ENCODE measurements at regions of chr3 and their contacts with region 1.

Region 1: GRCh38 chr3:31768479-31769123 is 212.5 kb downstream of the OSBPL10 start:
- DNase-seq: peak in 1 of 2 donors; percentile 71
- ATAC-seq: peak; percentile 43 to 69 (median 49)
- H3K4me3 ChIP-seq: no peak overlapping the region
- H3K4me3 Mint-ChIP-seq: no peak overlapping the region
- H3K27ac ChIP-seq: no peak overlapping the region
- H3K27ac Mint-ChIP-seq: no peak overlapping the region
- H3K4me1 ChIP-seq: no peaks in the 10 kb centered on the region
- H3K4me1 Mint-ChIP-seq: peaks cover 18 to 21% of the 10 kb centered on the region in 2 donors
- H3K27me3 ChIP-seq: no peaks in the 10 kb centered on the region
- H3K27me3 Mint-ChIP-seq: peaks cover 2 to 6% of the 10 kb centered on the region in 2 donors
- CTCF ChIP-seq: peak; percentile 64

Region 2: DNA sequence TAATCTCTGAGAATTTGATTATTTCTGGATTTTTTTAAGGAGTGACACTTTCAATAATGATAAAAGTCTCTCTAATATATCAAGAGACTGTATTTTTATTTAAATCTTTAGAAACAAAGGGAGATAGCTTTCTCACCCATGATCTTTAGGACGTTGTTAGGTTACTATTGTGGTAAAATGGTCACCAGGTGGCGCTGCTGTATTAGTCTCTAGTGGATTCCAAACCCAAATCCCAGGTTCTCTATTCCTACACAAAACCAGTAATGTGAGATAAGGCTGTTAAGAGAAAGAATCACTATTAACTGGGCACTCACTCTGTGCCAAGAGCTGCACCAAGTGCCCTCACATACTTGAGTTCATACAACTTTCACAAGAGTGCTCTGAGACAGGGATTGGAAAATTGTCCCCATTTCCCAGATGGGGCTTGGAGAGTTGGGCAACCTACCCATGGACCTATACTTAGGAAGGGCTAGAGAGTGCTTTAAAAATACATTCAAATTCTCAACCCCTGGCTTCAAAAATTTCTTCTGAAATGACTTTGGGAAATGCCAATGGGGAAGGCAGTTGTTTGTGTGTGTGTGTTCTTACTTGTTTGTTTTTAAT is 1755.6 kb before region 1 on chr3:
- intact Hi-C with region 1: loop called (anchors 10 kb)
- DNase-seq: peak; percentile 18 to 69
- ATAC-seq: peak in 1 of 3 donors; percentile 59
- H3K4me3 ChIP-seq: no peak overlapping the region
- H3K4me3 Mint-ChIP-seq: no peak overlapping the region
- H3K27ac ChIP-seq: no peak overlapping the region
- H3K27ac Mint-ChIP-seq: no peak overlapping the region
- H3K4me1 ChIP-seq: no peaks in the 10 kb centered on the region
- H3K4me1 Mint-ChIP-seq: no peaks in the 10 kb centered on the region
- H3K27me3 ChIP-seq: no peaks in the 10 kb centered on the region
- H3K27me3 Mint-ChIP-seq: no peaks in the 10 kb centered on the region
- CTCF ChIP-seq: peak; percentile 74

Region 3: GRCh38 chr3:30768703-30769685 is 999.6 kb before region 1 on chr3:
- intact Hi-C with region 1: loop called (anchors 1 kb)
- DNase-seq: peak; percentile 55 to 78
- ATAC-seq: peak in 2 of 3 donors; percentile 55 to 59
- H3K4me3 ChIP-seq: no peak overlapping the region
- H3K4me3 Mint-ChIP-seq: peak overlapping the region; percentile 19
- H3K27ac ChIP-seq: no peak overlapping the region
- H3K27ac Mint-ChIP-seq: no peak overlapping the region
- H3K4me1 ChIP-seq: no peaks in the 10 kb centered on the region
- H3K4me1 Mint-ChIP-seq: peaks cover 13 to 16% of the 10 kb centered on the region in 2 donors
- H3K27me3 ChIP-seq: no peaks in the 10 kb centered on the region
- H3K27me3 Mint-ChIP-seq: peaks cover 0 to 3% of the 10 kb centered on the region in 2 donors
- CTCF ChIP-seq: peak; percentile 76

Region 4: GRCh38 chr3:31550452-31551251 is 217.9 kb before region 1 on chr3:
- intact Hi-C with region 1: loop called (anchors 10 kb)
- DNase-seq: peak in 1 of 2 donors; percentile 70
- ATAC-seq: peak; percentile 66 to 81 (median 79)
- H3K4me3 ChIP-seq: no peak overlapping the region
- H3K4me3 Mint-ChIP-seq: no peak overlapping the region
- H3K27ac ChIP-seq: no peak overlapping the region
- H3K27ac Mint-ChIP-seq: peak overlapping the region; percentile 27 to 52
- H3K4me1 ChIP-seq: peaks cover 9% of the 10 kb centered on the region
- H3K4me1 Mint-ChIP-seq: peaks cover 66 to 70% of the 10 kb centered on the region in 2 donors
- H3K27me3 ChIP-seq: no peaks in the 10 kb centered on the region
- H3K27me3 Mint-ChIP-seq: no peaks in the 10 kb centered on the region
- CTCF ChIP-seq: peak; percentile 79

Region 5: GRCh38 chr3:31610700-31611275 is 157.8 kb before region 1 on chr3:
- intact Hi-C with region 1: loop called (anchors 2 kb)
- DNase-seq: peak in 1 of 2 donors; percentile 39
- ATAC-seq: peak in 2 of 3 donors; percentile 52 to 62
- H3K4me3 ChIP-seq: no peak overlapping the region
- H3K4me3 Mint-ChIP-seq: no peak overlapping the region
- H3K27ac ChIP-seq: no peak overlapping the region
- H3K27ac Mint-ChIP-seq: peak overlapping the region in 1 of 2 donors; percentile 66
- H3K4me1 ChIP-seq: no peaks in the 10 kb centered on the region
- H3K4me1 Mint-ChIP-seq: peaks cover 52 to 64% of the 10 kb centered on the region in 2 donors
- H3K27me3 ChIP-seq: no peaks in the 10 kb centered on the region
- H3K27me3 Mint-ChIP-seq: no peaks in the 10 kb centered on the region
- CTCF ChIP-seq: peak; percentile 47

Measured in natural killer cell (primary cell).